ENCODE measurements at regions of chr5 and their contacts with region 1.

Region 1: GRCh38 chr5:146965761-146966659 is 87.5 kb upstream of the PPP2R2B start:
- DNase-seq: peak; percentile 62
- H3K4me3 ChIP-seq: no peak overlapping the region
- H3K27ac ChIP-seq: no peak overlapping the region
- H3K4me1 ChIP-seq: peaks cover 4% of the 10 kb centered on the region
- H3K27me3 ChIP-seq: no peaks in the 10 kb centered on the region
- CTCF ChIP-seq: peak; percentile 83 to 84

Region 2: DNA sequence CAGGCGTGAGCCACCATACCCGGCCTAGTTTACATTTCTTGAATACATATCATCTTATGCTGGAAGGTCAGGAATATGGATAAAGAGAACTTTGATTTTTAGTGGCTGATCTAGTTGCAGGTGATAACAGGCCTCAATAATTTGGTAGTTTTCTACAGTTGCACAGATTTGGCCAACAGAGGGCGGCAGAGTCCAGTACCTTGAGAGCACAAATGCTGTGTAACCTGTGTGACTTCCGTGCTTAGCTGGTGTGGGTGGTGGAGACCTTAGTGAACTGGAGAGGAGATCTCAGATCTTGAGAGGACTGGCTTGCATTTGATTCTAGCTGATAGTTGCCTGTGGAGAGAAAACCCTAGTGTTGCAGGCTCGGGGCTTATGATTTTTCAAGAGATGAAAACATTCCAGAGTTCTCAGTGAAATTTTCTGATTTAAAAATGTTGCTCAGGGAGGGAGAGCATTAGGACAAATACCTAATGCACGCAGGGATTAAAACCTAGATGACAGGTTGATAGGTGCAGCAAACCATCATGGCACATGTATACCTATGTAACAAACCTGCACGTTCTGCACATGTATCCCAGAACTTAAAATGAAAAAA is 432.7 kb before region 1 on chr5:
- CTCF ChIA-PET with region 1: no interaction called
- dilution Hi-C with region 1: no loop called
- in situ Hi-C with region 1: no loop called
- intact Hi-C with region 1: loop called (anchors 2 kb)
- DNase-seq: peak; percentile 55
- H3K4me3 ChIP-seq: no peak overlapping the region
- H3K27ac ChIP-seq: no peak overlapping the region
- H3K4me1 ChIP-seq: peaks cover 2% of the 10 kb centered on the region
- H3K27me3 ChIP-seq: no peaks in the 10 kb centered on the region
- CTCF ChIP-seq: peak; percentile 89 to 94

Region 3: GRCh38 chr5:146653560-146653959 is 312.4 kb before region 1 on chr5:
- CTCF ChIA-PET with region 1: no interaction called
- dilution Hi-C with region 1: no loop called
- in situ Hi-C with region 1: loop called (anchors 10 kb)
- intact Hi-C with region 1: no loop called
- DNase-seq: no peak
- H3K4me3 ChIP-seq: no peak overlapping the region
- H3K27ac ChIP-seq: no peak overlapping the region
- H3K4me1 ChIP-seq: no peaks in the 10 kb centered on the region
- H3K27me3 ChIP-seq: no peaks in the 10 kb centered on the region
- CTCF ChIP-seq: no peak

Region 4: GRCh38 chr5:146799671-146800070 is 166.3 kb before region 1 on chr5:
- CTCF ChIA-PET with region 1: interaction called, 14 read pairs
- dilution Hi-C with region 1: no loop called
- in situ Hi-C with region 1: no loop called
- intact Hi-C with region 1: no loop called
- DNase-seq: no peak
- H3K4me3 ChIP-seq: no peak overlapping the region
- H3K27ac ChIP-seq: no peak overlapping the region
- H3K4me1 ChIP-seq: no peaks in the 10 kb centered on the region
- H3K27me3 ChIP-seq: peaks cover 2% of the 10 kb centered on the region
- CTCF ChIP-seq: no peak

Region 5: DNA sequence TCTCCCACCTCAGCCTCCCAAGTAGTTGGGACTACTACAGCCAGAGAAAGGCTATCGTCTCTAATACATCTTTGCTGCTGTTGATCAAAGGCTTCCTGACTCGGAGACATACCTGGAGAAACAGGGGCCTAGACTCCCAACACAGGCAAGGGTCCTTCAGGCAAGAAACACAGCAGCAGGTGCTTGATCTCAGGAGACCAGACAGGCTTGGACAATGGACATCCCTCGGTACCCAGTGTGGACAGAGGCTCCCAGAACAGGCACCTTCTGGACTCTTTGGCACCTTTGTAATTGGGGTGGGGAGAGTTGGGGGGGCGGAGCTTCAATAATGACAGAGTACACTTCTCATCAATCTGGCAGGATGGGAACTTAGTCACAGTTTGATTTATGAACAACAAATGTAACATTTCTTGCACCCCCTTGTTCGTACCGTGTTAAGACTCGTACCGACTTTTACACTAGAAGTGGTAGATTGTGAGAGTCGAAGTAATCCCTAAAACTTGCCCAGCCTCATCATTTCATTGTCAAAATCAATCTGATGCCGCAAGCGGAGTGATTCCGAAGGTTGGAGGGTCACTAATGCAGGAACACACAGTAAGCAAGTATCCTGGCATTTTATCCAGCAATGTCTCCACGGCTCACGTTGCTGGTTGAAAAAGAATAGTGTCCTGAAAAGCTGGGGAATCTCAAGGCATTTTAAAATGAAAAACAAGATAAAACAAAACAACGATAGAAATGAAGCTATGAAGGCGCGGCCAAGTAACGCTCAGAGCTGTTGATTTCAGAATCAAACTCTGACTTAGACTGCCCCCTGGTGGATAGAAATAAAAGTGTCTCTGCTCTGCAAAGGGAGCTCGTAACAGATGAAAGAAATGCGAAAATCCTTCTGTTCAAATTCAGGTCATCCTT is 222.4 kb after region 1 on chr5:
- CTCF ChIA-PET with region 1: interaction called, 8 read pairs
- dilution Hi-C with region 1: no loop called
- in situ Hi-C with region 1: no loop called
- intact Hi-C with region 1: loop called (anchors 2 kb)
- DNase-seq: peak; percentile 33
- H3K4me3 ChIP-seq: no peak overlapping the region
- H3K27ac ChIP-seq: no peak overlapping the region
- H3K4me1 ChIP-seq: no peaks in the 10 kb centered on the region
- H3K27me3 ChIP-seq: no peaks in the 10 kb centered on the region
- CTCF ChIP-seq: peak; percentile 73 to 76

Region 6: DNA sequence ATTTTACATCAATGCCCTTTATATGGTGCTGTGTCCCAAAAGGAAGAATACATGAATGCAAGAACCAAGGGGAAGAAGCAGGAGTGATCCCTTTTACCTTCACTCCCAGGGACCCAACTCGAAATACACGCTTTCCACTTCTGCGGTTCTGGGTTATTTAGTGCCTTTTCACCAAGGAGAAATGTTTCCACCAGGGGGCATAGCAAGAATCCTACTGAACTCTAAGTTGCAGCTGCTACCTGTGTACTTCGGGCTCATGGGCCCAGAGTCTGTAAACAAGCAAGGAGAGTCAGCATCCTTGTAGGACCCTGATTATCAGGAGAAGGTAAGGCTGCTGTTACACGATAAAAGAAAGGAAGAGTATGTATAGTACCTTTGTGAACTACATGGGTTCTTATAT is 498.2 kb after region 1 on chr5:
- CTCF ChIA-PET with region 1: no interaction called
- dilution Hi-C with region 1: no loop called
- in situ Hi-C with region 1: no loop called
- intact Hi-C with region 1: no loop called
- DNase-seq: peak; percentile 25
- H3K4me3 ChIP-seq: no peak overlapping the region
- H3K27ac ChIP-seq: no peak overlapping the region
- H3K4me1 ChIP-seq: no peaks in the 10 kb centered on the region
- H3K27me3 ChIP-seq: no peaks in the 10 kb centered on the region
- CTCF ChIP-seq: peak; percentile 37 to 67

Measured in mammary epithelial cell (primary cell).